CD4-positive, alpha-beta T cell (primary cell): ENCODE measurements at regions of chr20 and their contacts with region 1.

Region 1: GRCh38 chr20:50115591-50116372 is 2.8 kb upstream of the UBE2V1 start:
- DNase-seq: peak; percentile 82 to 97 (median 88)
- ATAC-seq: peak; percentile 83
- H3K4me3 ChIP-seq: peak overlapping the region; percentile 58
- H3K4me3 Mint-ChIP-seq: peak overlapping the region; percentile 92
- H3K27ac ChIP-seq: no peak overlapping the region
- H3K27ac Mint-ChIP-seq: peak overlapping the region; percentile 85
- H3K4me1 ChIP-seq: peaks cover 53% of the 10 kb centered on the region
- H3K4me1 Mint-ChIP-seq: peaks cover 53% of the 10 kb centered on the region
- H3K27me3 ChIP-seq: no peaks in the 10 kb centered on the region
- H3K27me3 Mint-ChIP-seq: no peaks in the 10 kb centered on the region
- CTCF ChIP-seq: no peak

Region 2: DNA sequence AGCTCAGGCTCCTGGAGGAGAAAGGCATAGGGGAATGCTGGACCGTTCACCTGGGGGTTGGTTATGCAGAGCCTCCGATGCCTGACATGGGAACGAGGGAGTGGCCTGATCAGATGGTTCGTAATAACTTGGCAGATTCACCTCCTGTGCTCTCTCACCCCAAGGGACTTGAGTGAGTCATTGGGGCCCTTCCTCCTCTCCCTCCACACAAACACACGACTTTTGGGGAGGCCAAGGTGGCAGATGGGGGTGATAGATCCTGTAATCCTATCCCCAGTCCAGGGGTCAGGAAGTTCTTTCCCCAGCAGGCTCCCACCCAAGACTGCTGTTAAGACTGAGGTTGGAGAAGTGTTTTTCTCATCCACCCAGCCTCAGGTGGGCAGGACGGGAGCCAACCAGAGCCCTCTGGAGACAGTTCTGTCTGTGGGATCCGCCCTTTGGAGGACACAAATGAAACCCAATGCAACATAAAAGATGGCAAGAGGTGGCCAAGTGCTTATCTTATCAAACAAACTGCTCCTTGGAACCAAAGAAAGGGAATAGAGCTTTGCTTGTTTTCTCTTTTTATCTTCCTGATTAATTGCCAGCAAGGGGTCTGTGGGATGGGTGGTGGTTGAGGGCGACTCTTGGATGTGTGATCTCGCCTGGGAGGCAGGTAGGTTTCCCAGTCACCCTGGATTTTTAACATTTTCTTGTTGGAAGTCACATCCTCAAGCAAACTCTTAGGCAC is 1239.7 kb before region 1 on chr20:
- CTCF ChIA-PET with region 1: no interaction called
- POLR2A ChIA-PET with region 1: no interaction called
- intact Hi-C with region 1: no loop called
- DNase-seq: peak in 2 of 14 experiments; percentile 24 to 48
- ATAC-seq: no peak
- H3K4me3 ChIP-seq: no peak overlapping the region
- H3K4me3 Mint-ChIP-seq: no peak overlapping the region
- H3K27ac ChIP-seq: no peak overlapping the region
- H3K27ac Mint-ChIP-seq: no peak overlapping the region
- H3K4me1 ChIP-seq: peaks cover 13% of the 10 kb centered on the region
- H3K4me1 Mint-ChIP-seq: peaks cover 4% of the 10 kb centered on the region
- H3K27me3 ChIP-seq: no peaks in the 10 kb centered on the region
- H3K27me3 Mint-ChIP-seq: no peaks in the 10 kb centered on the region
- CTCF ChIP-seq: no peak

Region 3: GRCh38 chr20:50146732-50147662 is 31.2 kb after region 1 on chr20:
- CTCF ChIA-PET with region 1: interaction called, 36 read pairs
- POLR2A ChIA-PET with region 1: interaction called, 47 read pairs
- intact Hi-C with region 1: loop called (anchors 1 to 2 kb)
- DNase-seq: peak; percentile 63 to 93 (median 75)
- ATAC-seq: peak; percentile 99
- H3K4me3 ChIP-seq: peak overlapping the region; percentile 45
- H3K4me3 Mint-ChIP-seq: peak overlapping the region; percentile 85
- H3K27ac ChIP-seq: peak overlapping the region; percentile 93
- H3K27ac Mint-ChIP-seq: peak overlapping the region; percentile 99
- H3K4me1 ChIP-seq: peaks cover 78% of the 10 kb centered on the region
- H3K4me1 Mint-ChIP-seq: peaks cover 70% of the 10 kb centered on the region
- H3K27me3 ChIP-seq: no peaks in the 10 kb centered on the region
- H3K27me3 Mint-ChIP-seq: no peaks in the 10 kb centered on the region
- CTCF ChIP-seq: no peak

Region 4: DNA sequence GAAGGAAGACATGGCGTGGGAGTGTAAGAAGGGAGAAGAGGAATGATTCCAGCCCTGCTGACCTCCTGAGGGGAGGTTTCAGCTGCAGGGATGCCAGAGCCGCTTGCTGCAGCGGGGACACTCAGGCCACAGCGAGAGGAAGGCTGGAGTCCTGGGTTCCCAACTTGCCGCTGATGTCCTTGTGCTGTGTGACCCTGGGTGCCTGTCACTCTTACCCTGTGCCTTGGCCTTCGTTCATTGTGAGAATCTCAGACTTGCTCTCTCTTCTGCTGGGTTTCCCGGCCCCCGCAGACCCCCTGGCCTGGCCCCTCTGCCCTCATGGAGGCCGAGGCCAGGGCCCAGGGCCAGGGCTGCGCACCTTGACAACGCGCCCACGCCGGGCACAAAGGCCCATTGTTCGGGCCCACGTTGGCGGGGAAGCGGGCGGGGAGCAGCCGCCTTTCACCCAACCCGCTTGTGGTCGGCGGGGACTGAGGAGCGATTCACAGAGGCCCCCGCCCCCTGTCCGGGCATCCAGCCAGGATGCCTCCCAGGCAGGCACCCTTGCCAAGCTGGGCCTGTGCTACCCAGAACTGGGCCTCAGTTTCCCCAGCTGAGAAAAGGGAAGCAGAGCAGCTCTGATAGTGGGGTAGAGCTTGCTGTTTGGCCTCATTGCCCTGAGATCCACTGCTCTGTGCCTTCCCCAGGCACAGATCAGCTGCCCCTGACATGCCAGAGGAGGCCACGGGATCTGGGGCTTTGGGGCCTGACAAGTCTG is 127.2 kb after region 1 on chr20:
- CTCF ChIA-PET with region 1: no interaction called
- POLR2A ChIA-PET with region 1: no interaction called
- intact Hi-C with region 1: no loop called
- DNase-seq: no peak
- ATAC-seq: no peak
- H3K4me3 ChIP-seq: no peak overlapping the region
- H3K4me3 Mint-ChIP-seq: no peak overlapping the region
- H3K27ac ChIP-seq: no peak overlapping the region
- H3K27ac Mint-ChIP-seq: no peak overlapping the region
- H3K4me1 ChIP-seq: no peaks in the 10 kb centered on the region
- H3K4me1 Mint-ChIP-seq: no peaks in the 10 kb centered on the region
- H3K27me3 ChIP-seq: no peaks in the 10 kb centered on the region
- H3K27me3 Mint-ChIP-seq: no peaks in the 10 kb centered on the region
- CTCF ChIP-seq: no peak

Region 5: GRCh38 chr20:50308513-50309279 is 192.9 kb after region 1 on chr20:
- CTCF ChIA-PET with region 1: no interaction called
- POLR2A ChIA-PET with region 1: no interaction called
- intact Hi-C with region 1: no loop called
- DNase-seq: peak in 2 of 14 experiments; percentile 51 to 64
- ATAC-seq: no peak
- H3K4me3 ChIP-seq: no peak overlapping the region
- H3K4me3 Mint-ChIP-seq: no peak overlapping the region
- H3K27ac ChIP-seq: no peak overlapping the region
- H3K27ac Mint-ChIP-seq: no peak overlapping the region
- H3K4me1 ChIP-seq: no peaks in the 10 kb centered on the region
- H3K4me1 Mint-ChIP-seq: no peaks in the 10 kb centered on the region
- H3K27me3 ChIP-seq: no peaks in the 10 kb centered on the region
- H3K27me3 Mint-ChIP-seq: peaks cover 8% of the 10 kb centered on the region
- CTCF ChIP-seq: no peak

Region 6: GRCh38 chr20:50460460-50461267 is 344.9 kb after region 1 on chr20:
- CTCF ChIA-PET with region 1: no interaction called
- POLR2A ChIA-PET with region 1: no interaction called
- intact Hi-C with region 1: loop called in 1 of 2 experiments (anchors 5 kb)
- DNase-seq: peak; percentile 70 to 85 (median 76)
- ATAC-seq: peak; percentile 91
- H3K4me3 ChIP-seq: no peak overlapping the region
- H3K4me3 Mint-ChIP-seq: no peak overlapping the region
- H3K27ac ChIP-seq: no peak overlapping the region
- H3K27ac Mint-ChIP-seq: no peak overlapping the region
- H3K4me1 ChIP-seq: peaks cover 7% of the 10 kb centered on the region
- H3K4me1 Mint-ChIP-seq: no peaks in the 10 kb centered on the region
- H3K27me3 ChIP-seq: peaks cover 0 to under 1% of the 10 kb centered on the region in 2 experiments
- H3K27me3 Mint-ChIP-seq: no peaks in the 10 kb centered on the region
- CTCF ChIP-seq: peak; percentile 75